Esophagus muscularis mucosa (tissue), 4 donors: ENCODE measurements at regions of chr10 and their contacts with region 1.

Region 1: GRCh38 chr10:15433850-15434537 is 62.9 kb upstream of the FAM171A1 start:
- DNase-seq: no peak
- H3K4me3 ChIP-seq: peak overlapping the region; percentile 41 to 49 (median 42)
- H3K27ac ChIP-seq: no peak overlapping the region
- H3K4me1 ChIP-seq: peaks cover 0 to 9% (median 7%) of the 10 kb centered on the region in 4 donors
- H3K27me3 ChIP-seq: no peaks in the 10 kb centered on the region
- CTCF ChIP-seq: peak; percentile 62 to 77 (median 75)
- EP300 ChIP-seq: no peak
- POLR2A ChIP-seq: no peak

Region 2: DNA sequence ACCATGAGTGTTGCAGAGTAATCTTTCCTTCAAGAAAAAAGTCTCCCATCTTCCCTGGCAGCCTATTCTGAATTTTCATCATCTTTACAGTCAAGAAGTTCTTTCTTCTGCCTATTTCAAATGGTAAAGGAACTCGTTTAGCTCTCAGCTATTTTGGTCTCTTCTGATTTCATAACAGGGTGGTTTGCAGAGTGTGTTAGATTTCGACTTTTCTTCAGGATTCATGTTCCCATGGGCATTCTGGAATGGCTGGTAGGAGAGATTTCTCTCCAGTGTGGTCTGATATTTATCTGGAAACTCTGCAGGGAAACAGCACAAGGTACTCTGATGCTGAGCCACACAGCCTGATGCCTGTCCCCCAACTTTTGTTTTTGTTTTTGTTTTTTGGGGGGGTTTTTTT is 48.2 kb after region 1 on chr10:
- intact Hi-C with region 1: no loop called
- DNase-seq: no peak
- H3K4me3 ChIP-seq: no peak overlapping the region
- H3K27ac ChIP-seq: no peak overlapping the region
- H3K4me1 ChIP-seq: peaks cover 0 to 17% (median 15%) of the 10 kb centered on the region in 4 donors
- H3K27me3 ChIP-seq: no peaks in the 10 kb centered on the region
- CTCF ChIP-seq: no peak
- EP300 ChIP-seq: no peak
- POLR2A ChIP-seq: no peak

Region 3: DNA sequence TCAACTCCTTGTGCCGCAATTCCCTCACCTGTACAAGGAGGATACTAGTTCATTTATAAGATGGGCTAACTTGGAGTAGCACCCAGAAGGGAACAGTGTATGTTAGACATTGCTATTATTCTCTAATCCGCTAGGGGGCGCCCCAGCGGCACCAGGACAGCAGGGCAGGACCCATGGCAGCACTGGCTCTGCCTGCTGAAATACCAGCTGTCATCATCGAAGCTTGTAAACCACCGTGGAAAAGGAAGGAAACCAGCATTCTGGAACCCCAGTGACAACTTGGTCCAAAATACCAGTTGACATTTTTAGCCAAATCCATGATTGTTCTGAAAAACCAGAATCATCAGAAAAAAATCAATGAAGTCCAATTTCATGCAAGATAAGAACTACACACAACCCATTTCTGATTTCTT is 151.3 kb after region 1 on chr10:
- intact Hi-C with region 1: loop called (anchors 10 kb)
- DNase-seq: no peak
- H3K4me3 ChIP-seq: no peak overlapping the region
- H3K27ac ChIP-seq: no peak overlapping the region
- H3K4me1 ChIP-seq: peaks cover 0 to 6% (median 2%) of the 10 kb centered on the region in 4 donors
- H3K27me3 ChIP-seq: no peaks in the 10 kb centered on the region
- CTCF ChIP-seq: peak; percentile 40 to 72 (median 58)
- EP300 ChIP-seq: no peak
- POLR2A ChIP-seq: no peak

Region 4: GRCh38 chr10:15824498-15824897 is 390.5 kb after region 1 on chr10:
- intact Hi-C with region 1: loop called (anchors 5 kb)
- DNase-seq: no peak
- H3K4me3 ChIP-seq: no peak overlapping the region
- H3K27ac ChIP-seq: no peak overlapping the region
- H3K4me1 ChIP-seq: peaks cover 0 to 3% (median under 1%) of the 10 kb centered on the region in 4 donors
- H3K27me3 ChIP-seq: no peaks in the 10 kb centered on the region
- CTCF ChIP-seq: peak; percentile 54 to 67 (median 60)
- EP300 ChIP-seq: no peak
- POLR2A ChIP-seq: no peak